Activated T-helper 1 cell treated with anti-CD3 and anti-CD28 coated beads, Interleukin-12 subunit alpha, Interleukin-12 subunit beta, Interleukin-2, Interleukin-4 antibody, amounts not matched to agents 30 ng/mL and 10 ng/mL and 1 ng/mL, durations not matched to agents 14 hours and 24 hours and 36 hours (primary cell): ENCODE measurements at regions of chr1 and their contacts with region 1.

Region 1: DNA sequence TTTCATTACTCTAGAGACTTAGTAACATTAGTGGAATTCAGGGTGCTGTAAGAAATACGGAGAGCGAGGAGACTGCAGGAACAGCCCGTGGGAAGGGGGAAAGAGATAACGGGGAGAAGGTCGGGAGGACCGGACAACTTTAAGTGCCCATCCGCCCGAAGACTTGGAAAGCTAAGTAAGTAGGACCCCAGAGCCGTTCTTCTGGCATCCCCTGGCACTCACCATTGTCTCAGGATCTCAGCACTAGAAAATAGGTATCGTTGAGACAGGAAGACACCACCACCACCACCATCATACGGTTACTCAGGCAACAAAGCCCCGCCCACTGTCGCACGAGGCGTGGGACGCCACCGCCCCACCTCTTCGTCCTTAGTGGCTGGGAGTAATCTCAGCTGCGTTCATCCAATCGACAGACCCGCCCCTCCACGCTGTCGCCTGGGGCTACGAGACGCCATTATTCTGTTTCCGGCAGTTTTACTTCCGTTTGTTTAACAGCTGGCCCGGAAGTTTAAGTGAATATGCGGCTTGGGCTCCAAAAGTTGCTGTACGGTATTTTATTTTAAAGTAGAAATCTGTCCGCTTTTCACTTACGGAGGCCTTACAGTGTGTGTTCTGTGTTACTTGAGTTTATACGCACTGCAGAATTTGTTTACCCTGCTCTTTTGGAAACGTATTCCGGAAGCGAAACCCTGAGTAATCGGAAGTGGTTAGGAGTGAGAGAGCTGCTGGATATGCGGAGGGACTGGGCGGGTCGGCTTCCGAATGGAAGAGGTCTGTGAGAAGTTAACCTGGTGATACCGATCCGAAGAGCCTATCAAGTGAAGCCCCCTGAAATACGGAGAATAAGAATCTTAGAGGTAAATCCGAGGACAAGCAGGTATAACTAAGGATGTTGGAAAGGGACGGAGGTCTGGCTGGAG is at the starts of genes BLZF1 and NME7:
- DNase-seq: peak; percentile 99
- H3K4me3 Mint-ChIP-seq: no peak within 1 kb of the TSS
- H3K27ac Mint-ChIP-seq: peak within 1 kb of the TSS; percentile 36
- H3K4me1 Mint-ChIP-seq: peaks cover 35% of the 10 kb centered on the region
- H3K27me3 Mint-ChIP-seq: no peaks in the 10 kb centered on the region
- total RNA-seq, gene BLZF1: 15.1 and 16.1 TPM in 2 replicates
- total RNA-seq, gene NME7: 13.9 and 25.8 TPM in 2 replicates

Region 2: GRCh38 chr1:168178638-168179437 is 1188.9 kb before region 1 on chr1 and contains the start of gene TIPRL:
- intact Hi-C with region 1: loop called (anchors 1 kb)
- DNase-seq: peak; percentile 95
- H3K4me3 Mint-ChIP-seq: no peak within 1 kb of the TSS
- H3K27ac Mint-ChIP-seq: no peak within 1 kb of the TSS
- H3K4me1 Mint-ChIP-seq: no peaks in the 10 kb centered on the region
- H3K27me3 Mint-ChIP-seq: no peaks in the 10 kb centered on the region
- total RNA-seq, gene TIPRL: 42.8 and 45.7 TPM in 2 replicates

Region 3: GRCh38 chr1:168408536-168409242 is 959.1 kb before region 1 on chr1:
- intact Hi-C with region 1: loop called (anchors 10 kb)
- DNase-seq: peak; percentile 64
- H3K4me3 Mint-ChIP-seq: peak overlapping the region; percentile 24
- H3K27ac Mint-ChIP-seq: peak overlapping the region; percentile 86
- H3K4me1 Mint-ChIP-seq: peaks cover 42% of the 10 kb centered on the region
- H3K27me3 Mint-ChIP-seq: no peaks in the 10 kb centered on the region

Region 4: DNA sequence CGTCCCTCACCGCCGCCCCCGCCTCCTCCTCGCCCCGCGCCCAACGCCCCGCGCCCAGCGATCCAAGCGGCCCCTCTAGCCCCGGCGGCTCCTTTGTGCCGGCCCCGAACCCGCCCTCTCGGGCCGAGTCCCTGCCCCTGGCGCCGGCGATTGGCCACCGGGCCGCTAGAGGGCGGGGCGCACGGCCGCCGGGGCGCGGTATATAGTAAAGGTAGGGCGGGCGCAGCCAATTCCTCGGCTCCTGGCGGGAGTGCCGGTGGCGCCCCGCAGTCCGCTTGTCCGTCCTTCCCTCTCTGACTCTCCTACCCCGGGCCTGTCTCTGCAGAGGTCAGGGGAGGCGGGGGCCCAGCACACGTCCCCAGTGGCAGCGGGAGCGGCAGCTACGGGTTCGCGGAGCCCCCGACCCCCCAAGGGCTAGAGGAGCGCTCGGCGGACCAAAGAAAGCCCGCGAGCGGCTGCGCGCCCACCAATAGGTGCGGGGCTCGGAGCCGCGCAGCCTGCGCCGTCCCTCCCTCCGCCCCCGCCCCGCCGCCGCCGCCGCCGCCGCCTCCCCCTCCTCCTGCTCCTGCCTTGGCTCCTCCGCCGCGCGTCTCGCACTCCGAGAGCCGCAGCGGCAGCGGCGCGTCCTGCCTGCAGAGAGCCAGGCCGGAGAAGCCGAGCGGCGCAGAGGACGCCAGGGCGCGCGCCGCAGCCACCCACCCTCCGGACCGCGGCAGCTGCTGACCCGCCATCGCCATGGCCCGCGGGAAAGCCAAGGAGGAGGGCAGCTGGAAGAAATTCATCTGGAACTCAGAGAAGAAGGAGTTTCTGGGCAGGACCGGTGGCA is 261.4 kb before region 1 on chr1 and contains the start of gene ATP1B1:
- intact Hi-C with region 1: loop called (anchors 1 kb)
- DNase-seq: peak; percentile 81
- H3K4me3 Mint-ChIP-seq: peak within 1 kb of the TSS; percentile 89
- H3K27ac Mint-ChIP-seq: peak within 1 kb of the TSS; percentile 80
- H3K4me1 Mint-ChIP-seq: peaks cover 51% of the 10 kb centered on the region
- H3K27me3 Mint-ChIP-seq: peaks cover 5% of the 10 kb centered on the region
- total RNA-seq, gene ATP1B1: 12.3 TPM in 2 replicates

Region 5: DNA sequence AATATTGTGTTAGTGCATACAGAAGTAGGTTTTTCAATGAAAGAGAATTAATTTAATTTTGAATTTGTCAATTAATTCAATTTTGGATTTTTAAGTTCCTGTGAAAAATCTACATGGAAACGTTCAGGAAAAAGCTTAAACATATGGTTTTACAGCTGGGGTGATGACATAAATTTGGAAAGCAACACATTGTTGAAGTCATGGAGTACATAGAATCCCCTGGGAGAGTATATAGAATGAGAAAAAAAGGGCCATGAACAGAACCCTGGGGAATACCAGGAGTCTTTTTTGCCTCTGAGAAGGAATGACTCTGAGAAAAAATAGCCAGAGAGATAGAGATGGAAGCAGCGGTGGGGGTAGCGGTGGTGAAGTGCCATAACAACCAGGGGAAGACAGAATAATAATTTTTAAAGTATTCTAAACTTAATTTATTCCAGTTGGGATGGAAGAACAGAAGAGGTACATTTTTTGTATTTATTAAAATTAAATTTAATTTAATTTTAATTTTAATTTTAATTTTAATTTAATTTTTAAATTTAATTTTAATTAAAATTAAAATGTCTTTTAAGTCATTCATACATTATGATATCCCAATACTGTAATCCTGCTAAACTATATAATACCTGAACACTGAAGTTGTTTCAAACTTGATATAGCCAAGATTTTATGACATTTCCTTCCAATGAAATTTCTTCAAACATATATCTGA is 49.1 kb before region 1 on chr1:
- intact Hi-C with region 1: no loop called
- DNase-seq: no peak
- H3K4me3 Mint-ChIP-seq: no peak overlapping the region
- H3K27ac Mint-ChIP-seq: no peak overlapping the region
- H3K4me1 Mint-ChIP-seq: no peaks in the 10 kb centered on the region
- H3K27me3 Mint-ChIP-seq: no peaks in the 10 kb centered on the region

Region 6: DNA sequence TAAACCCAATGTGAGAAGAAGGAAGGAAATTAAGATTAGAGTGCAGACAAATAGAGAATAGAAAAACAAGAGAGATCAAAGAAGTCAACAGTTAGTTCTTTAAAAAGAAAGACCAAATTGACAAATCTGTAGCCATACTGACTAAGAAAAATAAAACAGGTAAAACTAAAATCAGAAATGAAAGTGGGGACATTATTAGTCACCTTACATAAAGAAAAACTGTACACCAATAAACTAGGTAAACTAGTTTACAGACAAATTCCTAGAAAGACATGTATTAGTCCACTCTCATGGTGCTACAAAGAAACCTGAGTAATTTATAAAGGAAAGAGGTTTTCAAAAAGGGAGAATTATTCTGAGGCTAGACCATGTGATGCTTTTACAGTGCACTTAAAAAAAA is 22.6 kb after region 1 on chr1:
- intact Hi-C with region 1: loop called (anchors 1 kb)
- DNase-seq: no peak
- H3K4me3 Mint-ChIP-seq: no peak overlapping the region
- H3K27ac Mint-ChIP-seq: peak overlapping the region; percentile 29
- H3K4me1 Mint-ChIP-seq: peaks cover 21% of the 10 kb centered on the region
- H3K27me3 Mint-ChIP-seq: no peaks in the 10 kb centered on the region

Region 7: GRCh38 chr1:169586395-169587255 is 218.9 kb after region 1 on chr1 and contains the start of gene F5:
- intact Hi-C with region 1: loop called (anchors 2 kb)
- DNase-seq: peak; percentile 71
- H3K4me3 Mint-ChIP-seq: peak within 1 kb of the TSS; percentile 96
- H3K27ac Mint-ChIP-seq: peak within 1 kb of the TSS; percentile 91
- H3K4me1 Mint-ChIP-seq: peaks cover 81% of the 10 kb centered on the region
- H3K27me3 Mint-ChIP-seq: no peaks in the 10 kb centered on the region
- total RNA-seq, gene F5: 58.0 and 58.2 TPM in 2 replicates

Region 8: GRCh38 chr1:169724168-169724567 is 356.4 kb after region 1 on chr1:
- intact Hi-C with region 1: no loop called
- DNase-seq: no peak
- H3K4me3 Mint-ChIP-seq: no peak overlapping the region
- H3K27ac Mint-ChIP-seq: no peak overlapping the region
- H3K4me1 Mint-ChIP-seq: no peaks in the 10 kb centered on the region
- H3K27me3 Mint-ChIP-seq: peaks cover 12% of the 10 kb centered on the region

Region 9: GRCh38 chr1:169893494-169894362 is 526.0 kb after region 1 on chr1 and contains the start of gene SCYL3:
- intact Hi-C with region 1: loop called (anchors 1 kb)
- DNase-seq: peak; percentile 86
- H3K4me3 Mint-ChIP-seq: peak within 1 kb of the TSS; percentile 86
- H3K27ac Mint-ChIP-seq: peak within 1 kb of the TSS; percentile 100
- H3K4me1 Mint-ChIP-seq: peaks cover 51% of the 10 kb centered on the region
- H3K27me3 Mint-ChIP-seq: peaks cover 12% of the 10 kb centered on the region
- total RNA-seq, gene SCYL3: 11.8 and 12.3 TPM in 2 replicates